ENCODE measurements at regions of chr2 and their contacts with region 1.

Region 1: DNA sequence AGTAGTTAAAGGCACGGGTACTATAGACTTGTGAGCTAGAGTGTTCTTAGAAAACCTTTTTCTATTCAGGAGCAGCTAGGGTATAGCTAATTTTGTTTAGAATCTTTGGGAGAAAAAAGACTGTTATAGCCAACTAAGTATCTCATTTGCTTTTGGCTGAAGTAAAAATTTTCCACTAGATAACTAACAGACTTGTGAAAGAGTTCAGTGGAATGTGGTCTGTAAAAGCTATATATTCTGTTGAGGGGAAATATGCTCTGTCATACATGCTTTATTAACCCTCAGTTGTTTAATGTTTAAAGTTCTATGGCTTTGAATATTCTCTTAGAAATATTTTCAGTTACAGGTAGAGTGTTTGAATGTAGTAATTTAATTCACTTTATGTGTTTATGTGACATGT is 49.7 kb downstream of the RIF1 start:
- DNase-seq: no peak
- H3K4me3 Mint-ChIP-seq: no peak overlapping the region
- H3K27ac Mint-ChIP-seq: no peak overlapping the region
- H3K4me1 Mint-ChIP-seq: no peaks in the 10 kb centered on the region
- H3K27me3 Mint-ChIP-seq: no peaks in the 10 kb centered on the region

Region 2: GRCh38 chr2:151437630-151438029 is 21.7 kb before region 1 on chr2:
- CTCF ChIA-PET with region 1: interaction called, 10 read pairs
- DNase-seq: no peak
- H3K4me3 Mint-ChIP-seq: no peak overlapping the region
- H3K27ac Mint-ChIP-seq: peak overlapping the region; percentile 78
- H3K4me1 Mint-ChIP-seq: peaks cover 18% of the 10 kb centered on the region
- H3K27me3 Mint-ChIP-seq: no peaks in the 10 kb centered on the region

Region 3: GRCh38 chr2:151560289-151560688 is 100.9 kb after region 1 on chr2:
- CTCF ChIA-PET with region 1: no interaction called
- DNase-seq: no peak
- H3K4me3 Mint-ChIP-seq: no peak overlapping the region
- H3K27ac Mint-ChIP-seq: no peak overlapping the region
- H3K4me1 Mint-ChIP-seq: no peaks in the 10 kb centered on the region
- H3K27me3 Mint-ChIP-seq: peaks cover 4% of the 10 kb centered on the region